Thyroid gland (tissue), 4 donors: ENCODE measurements at regions of chr19 and their contacts with region 1.

Region 1: GRCh38 chr19:57890412-57891105 is 1.7 kb upstream of the ZNF814 start:
- DNase-seq: no peak
- H3K4me3 ChIP-seq: no peak overlapping the region
- H3K27ac ChIP-seq: no peak overlapping the region
- H3K4me1 ChIP-seq: peaks cover 5 to 9% of the 10 kb centered on the region in 2 donors
- H3K27me3 ChIP-seq: no peaks in the 10 kb centered on the region
- CTCF ChIP-seq: no peak
- POLR2A ChIP-seq: no peak

Region 2: DNA sequence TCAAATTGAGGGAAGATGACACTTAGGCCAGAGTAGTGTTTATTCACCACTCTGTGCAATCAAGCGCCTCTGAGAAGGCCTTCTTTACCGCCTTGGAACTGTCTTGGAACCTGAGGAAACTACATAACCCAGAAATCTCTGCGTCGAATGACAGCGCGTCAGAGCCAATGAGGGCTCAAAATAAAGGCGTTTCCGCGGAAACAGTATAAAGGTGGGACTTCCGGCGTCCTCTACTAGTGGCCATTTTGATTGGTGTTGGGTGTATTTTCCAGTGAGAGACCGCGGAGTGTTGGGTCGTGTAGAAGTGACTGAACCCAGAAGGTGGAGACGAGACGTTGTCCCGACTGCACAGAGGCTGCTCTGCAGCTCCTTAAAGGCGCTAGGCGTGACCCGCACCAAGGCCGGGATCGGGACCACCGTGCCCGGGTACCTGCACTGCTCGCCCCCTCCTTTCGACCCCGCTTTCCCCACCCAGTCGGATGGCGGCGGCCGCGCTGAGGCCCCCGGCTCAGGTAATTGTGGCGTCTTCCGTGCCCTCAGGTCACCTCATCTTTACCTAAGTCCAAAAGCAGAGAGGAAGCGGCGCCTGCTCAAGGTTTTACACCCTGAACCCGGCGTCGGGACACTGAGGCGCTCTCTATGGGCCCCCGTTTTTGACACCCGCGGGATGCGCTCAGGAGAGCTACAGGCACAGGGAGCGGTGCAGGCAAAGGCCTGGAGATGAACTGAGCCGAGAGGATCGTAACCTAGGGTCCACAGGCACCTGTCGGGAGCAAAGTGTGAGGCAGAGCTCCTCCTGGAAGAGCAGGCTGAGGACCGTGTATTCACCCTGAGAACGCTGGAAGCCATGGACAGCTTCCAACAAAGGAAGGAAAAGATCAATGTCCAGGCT is 143.7 kb before region 1 on chr19 and contains the start of gene ZNF776:
- intact Hi-C with region 1: loop called (anchors 10 kb)
- DNase-seq: peak; percentile 84 to 87
- H3K4me3 ChIP-seq: peak within 1 kb of the TSS; percentile 63 to 95 (median 68)
- H3K27ac ChIP-seq: peak within 1 kb of the TSS; percentile 49 to 85 (median 74)
- H3K4me1 ChIP-seq: peaks cover 13 to 23% of the 10 kb centered on the region in 2 donors
- H3K27me3 ChIP-seq: no peaks in the 10 kb centered on the region
- CTCF ChIP-seq: no peak
- POLR2A ChIP-seq: peak in 1 of 2 donors; percentile 59
- total RNA-seq, gene ZNF776: 17.6 to 24.4 (median 22.4) TPM

Region 3: GRCh38 chr19:57841122-57841763 is 49.3 kb before region 1 on chr19:
- intact Hi-C with region 1: no loop called
- DNase-seq: no peak
- H3K4me3 ChIP-seq: no peak overlapping the region
- H3K27ac ChIP-seq: no peak overlapping the region
- H3K4me1 ChIP-seq: no peaks in the 10 kb centered on the region
- H3K27me3 ChIP-seq: no peaks in the 10 kb centered on the region
- CTCF ChIP-seq: no peak
- POLR2A ChIP-seq: no peak